ENCODE measurements at regions of chr11 and their contacts with region 1.

Region 1: DNA sequence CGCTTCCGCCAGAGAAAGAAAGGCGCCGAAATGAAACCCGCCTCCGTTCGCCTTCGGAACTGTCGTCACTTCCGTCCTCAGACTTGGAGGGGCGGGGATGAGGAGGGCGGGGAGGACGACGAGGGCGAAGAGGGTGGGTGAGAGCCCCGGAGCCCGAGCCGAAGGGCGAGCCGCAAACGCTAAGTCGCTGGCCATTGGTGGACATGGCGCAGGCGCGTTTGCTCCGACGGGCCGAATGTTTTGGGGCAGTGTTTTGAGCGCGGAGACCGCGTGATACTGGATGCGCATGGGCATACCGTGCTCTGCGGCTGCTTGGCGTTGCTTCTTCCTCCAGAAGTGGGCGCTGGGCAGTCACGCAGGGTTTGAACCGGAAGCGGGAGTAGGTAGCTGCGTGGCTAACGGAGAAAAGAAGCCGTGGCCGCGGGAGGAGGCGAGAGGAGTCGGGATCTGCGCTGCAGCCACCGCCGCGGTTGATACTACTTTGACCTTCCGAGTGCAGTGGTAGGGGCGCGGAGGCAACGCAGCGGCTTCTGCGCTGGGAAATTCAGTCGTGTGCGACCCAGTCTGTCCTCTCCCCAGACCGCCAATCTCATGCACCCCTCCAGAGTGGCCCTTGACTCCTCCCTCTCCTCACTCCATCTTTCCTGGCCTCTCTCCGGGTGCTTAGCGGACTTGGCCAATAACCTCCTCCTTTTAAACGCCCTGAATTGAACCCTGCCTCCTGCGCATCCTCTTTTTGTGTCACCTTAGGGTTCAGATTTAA is at the start of gene ATM:
- DNase-seq: peak; percentile 94
- ATAC-seq: peak; percentile 82
- H3K4me3 Mint-ChIP-seq: no peak within 1 kb of the TSS
- H3K27ac Mint-ChIP-seq: no peak within 1 kb of the TSS
- H3K4me1 Mint-ChIP-seq: peaks cover 51% of the 10 kb centered on the region
- H3K27me3 Mint-ChIP-seq: no peaks in the 10 kb centered on the region
- CTCF ChIP-seq: no peak
- total RNA-seq, gene ATM: 164 and 184 TPM in 2 replicates

Region 2: DNA sequence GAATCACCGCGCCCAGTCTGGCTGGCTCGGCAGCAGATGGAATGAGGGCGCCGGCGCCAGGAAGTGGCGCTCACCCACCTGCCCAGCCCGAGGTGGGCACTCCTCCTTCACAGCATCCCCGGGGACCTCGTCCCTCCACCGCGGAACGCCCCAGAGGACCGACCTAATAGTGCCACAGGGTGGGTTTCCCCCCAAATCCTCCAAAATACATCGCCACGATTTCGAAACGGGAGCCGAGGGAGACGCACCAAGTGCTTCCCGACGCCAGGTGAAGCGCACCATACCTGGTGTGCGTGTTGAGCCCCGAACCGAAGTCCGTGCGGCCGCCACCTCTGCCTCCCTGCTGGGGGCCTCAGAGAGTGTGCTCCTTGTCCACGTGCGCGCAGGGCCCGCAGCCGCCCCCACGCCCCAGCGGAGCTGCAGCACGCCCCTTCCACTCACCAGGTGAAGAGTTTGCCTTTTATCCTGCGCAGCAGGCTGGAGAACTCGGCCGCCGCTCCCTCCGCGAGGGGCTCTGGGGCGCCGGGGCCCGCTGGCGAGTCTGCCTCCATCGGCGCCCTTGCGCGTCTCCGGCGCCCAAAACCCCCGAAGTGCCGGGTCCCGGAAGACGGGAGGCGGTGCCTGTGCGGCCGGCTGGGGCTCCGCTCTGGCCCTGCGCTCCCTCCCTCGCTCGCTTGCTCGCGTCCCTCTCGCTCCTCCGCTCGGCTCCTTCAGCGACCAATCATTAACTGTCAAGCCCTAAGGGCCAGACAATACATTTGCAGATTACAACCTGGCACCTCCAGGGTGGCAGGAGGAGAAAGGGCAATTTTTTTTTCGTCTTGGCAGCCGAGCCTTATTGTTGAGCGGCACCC is 364.4 kb before region 1 on chr11 and contains the start of gene SLC35F2:
- CTCF ChIA-PET with region 1: no interaction called
- POLR2A ChIA-PET with region 1: no interaction called
- intact Hi-C with region 1: loop called (anchors 2 kb)
- DNase-seq: peak; percentile 78
- ATAC-seq: peak; percentile 93
- H3K4me3 Mint-ChIP-seq: peak within 1 kb of the TSS; percentile 96
- H3K27ac Mint-ChIP-seq: peak within 1 kb of the TSS; percentile 90
- H3K4me1 Mint-ChIP-seq: peaks cover 30% of the 10 kb centered on the region
- H3K27me3 Mint-ChIP-seq: no peaks in the 10 kb centered on the region
- CTCF ChIP-seq: no peak
- total RNA-seq, gene SLC35F2: 20.5 and 21.9 TPM in 2 replicates

Region 3: GRCh38 chr11:108121274-108122155 is 101.4 kb before region 1 on chr11 and contains the start of gene ACAT1:
- CTCF ChIA-PET with region 1: no interaction called
- POLR2A ChIA-PET with region 1: interaction called, 5 read pairs
- intact Hi-C with region 1: loop called (anchors 1 kb)
- DNase-seq: peak; percentile 96
- ATAC-seq: peak; percentile 99
- H3K4me3 Mint-ChIP-seq: peak within 1 kb of the TSS; percentile 87
- H3K27ac Mint-ChIP-seq: peak within 1 kb of the TSS; percentile 56
- H3K4me1 Mint-ChIP-seq: peaks cover 39% of the 10 kb centered on the region
- H3K27me3 Mint-ChIP-seq: no peaks in the 10 kb centered on the region
- CTCF ChIP-seq: no peak
- total RNA-seq, gene ACAT1: 50.1 and 51.1 TPM in 2 replicates

Region 4: GRCh38 chr11:108206969-108207682 is 15.7 kb before region 1 on chr11:
- CTCF ChIA-PET with region 1: no interaction called
- POLR2A ChIA-PET with region 1: interaction called, 10 read pairs
- intact Hi-C with region 1: no loop called
- DNase-seq: no peak
- ATAC-seq: no peak
- H3K4me3 Mint-ChIP-seq: no peak overlapping the region
- H3K27ac Mint-ChIP-seq: no peak overlapping the region
- H3K4me1 Mint-ChIP-seq: peaks cover 22% of the 10 kb centered on the region
- H3K27me3 Mint-ChIP-seq: no peaks in the 10 kb centered on the region
- CTCF ChIP-seq: no peak

Region 5: GRCh38 chr11:108393046-108393445 is 170.2 kb after region 1 on chr11:
- CTCF ChIA-PET with region 1: no interaction called
- POLR2A ChIA-PET with region 1: no interaction called
- intact Hi-C with region 1: no loop called
- DNase-seq: no peak
- ATAC-seq: no peak
- H3K4me3 Mint-ChIP-seq: no peak overlapping the region
- H3K27ac Mint-ChIP-seq: no peak overlapping the region
- H3K4me1 Mint-ChIP-seq: no peaks in the 10 kb centered on the region
- H3K27me3 Mint-ChIP-seq: no peaks in the 10 kb centered on the region
- CTCF ChIP-seq: no peak

Region 6: GRCh38 chr11:108467091-108467823 is 244.4 kb after region 1 on chr11 and contains the start of gene C11orf65:
- CTCF ChIA-PET with region 1: no interaction called
- POLR2A ChIA-PET with region 1: interaction called, 3 read pairs
- intact Hi-C with region 1: loop called (anchors 1 kb)
- DNase-seq: peak; percentile 90
- ATAC-seq: peak; percentile 97
- H3K4me3 Mint-ChIP-seq: peak within 1 kb of the TSS; percentile 98
- H3K27ac Mint-ChIP-seq: peak within 1 kb of the TSS; percentile 99
- H3K4me1 Mint-ChIP-seq: peaks cover 18% of the 10 kb centered on the region
- H3K27me3 Mint-ChIP-seq: no peaks in the 10 kb centered on the region
- CTCF ChIP-seq: no peak
- total RNA-seq, gene C11orf65: 0.69 and 1.7 TPM in 2 replicates

Region 7: GRCh38 chr11:108664730-108665525 is 442.1 kb after region 1 on chr11 and contains the start of gene DDX10:
- CTCF ChIA-PET with region 1: no interaction called
- POLR2A ChIA-PET with region 1: interaction called, 10 read pairs
- intact Hi-C with region 1: loop called (anchors 2 kb)
- DNase-seq: peak; percentile 95
- ATAC-seq: peak; percentile 100
- H3K4me3 Mint-ChIP-seq: peak within 1 kb of the TSS; percentile 100
- H3K27ac Mint-ChIP-seq: peak within 1 kb of the TSS; percentile 96
- H3K4me1 Mint-ChIP-seq: peaks cover 46% of the 10 kb centered on the region
- H3K27me3 Mint-ChIP-seq: no peaks in the 10 kb centered on the region
- CTCF ChIP-seq: no peak
- total RNA-seq, gene DDX10: 37.7 and 43.3 TPM in 2 replicates

Measured in activated B cell treated with CpG ODN at 0.5 μM for 24 hours (primary cell).